Caco-2 (cell line): ENCODE measurements at regions of chr11 and their contacts with region 1.

Region 1: GRCh38 chr11:75656044-75656727 is 12.7 kb downstream of the MAP6 start:
- DNase-seq: peak; percentile 82 to 96
- H3K4me3 ChIP-seq: no peak overlapping the region
- H3K4me3 Mint-ChIP-seq: peak overlapping the region; percentile 3
- H3K27ac Mint-ChIP-seq: peak overlapping the region; percentile 6
- H3K4me1 ChIP-seq: peaks cover 89% of the 10 kb centered on the region
- H3K4me1 Mint-ChIP-seq: peaks cover 65% of the 10 kb centered on the region
- H3K27me3 ChIP-seq: no peaks in the 10 kb centered on the region
- H3K27me3 Mint-ChIP-seq: no peaks in the 10 kb centered on the region
- CTCF ChIP-seq: peak; percentile 26 to 36

Region 2: DNA sequence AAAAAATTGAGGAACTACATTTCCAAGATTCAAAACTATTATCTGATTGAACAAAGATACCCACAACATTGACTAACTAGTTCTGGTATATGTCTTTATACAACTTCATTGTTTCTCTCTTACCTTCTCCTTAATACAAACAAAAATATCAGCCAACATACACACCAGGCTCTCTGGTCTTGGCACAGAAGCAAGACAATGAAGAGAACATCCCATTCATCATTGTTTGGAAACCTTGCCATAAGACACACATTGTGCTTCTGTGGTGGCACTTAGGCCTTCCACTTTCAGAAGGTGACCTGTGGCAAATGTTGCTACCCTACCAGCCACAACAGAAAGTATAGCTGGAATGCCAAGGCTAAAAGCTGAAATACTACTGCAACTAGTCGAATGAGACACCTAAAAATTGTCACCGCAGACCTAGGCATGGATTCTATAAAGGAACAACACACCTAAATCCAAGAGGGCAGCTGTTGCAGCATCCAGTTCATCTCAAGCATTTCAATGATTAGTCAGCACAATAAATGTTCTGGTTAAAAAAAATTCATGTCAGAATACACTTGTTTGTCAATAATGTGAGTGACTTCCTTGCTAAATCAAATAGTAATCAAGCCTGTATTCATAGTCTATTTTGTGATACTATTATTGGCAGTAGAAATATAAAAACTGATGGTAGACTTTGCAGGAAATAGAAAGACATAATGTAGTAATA is 13.6 kb before region 1 on chr11:
- CTCF ChIA-PET with region 1: no interaction called
- POLR2A ChIA-PET with region 1: no interaction called
- intact Hi-C with region 1: loop called (anchors 1 kb)
- DNase-seq: no peak
- H3K4me3 ChIP-seq: no peak overlapping the region
- H3K4me3 Mint-ChIP-seq: no peak overlapping the region
- H3K27ac Mint-ChIP-seq: no peak overlapping the region
- H3K4me1 ChIP-seq: peaks cover 62% of the 10 kb centered on the region
- H3K4me1 Mint-ChIP-seq: peaks cover 48% of the 10 kb centered on the region
- H3K27me3 ChIP-seq: no peaks in the 10 kb centered on the region
- H3K27me3 Mint-ChIP-seq: no peaks in the 10 kb centered on the region
- CTCF ChIP-seq: no peak

Region 3: DNA sequence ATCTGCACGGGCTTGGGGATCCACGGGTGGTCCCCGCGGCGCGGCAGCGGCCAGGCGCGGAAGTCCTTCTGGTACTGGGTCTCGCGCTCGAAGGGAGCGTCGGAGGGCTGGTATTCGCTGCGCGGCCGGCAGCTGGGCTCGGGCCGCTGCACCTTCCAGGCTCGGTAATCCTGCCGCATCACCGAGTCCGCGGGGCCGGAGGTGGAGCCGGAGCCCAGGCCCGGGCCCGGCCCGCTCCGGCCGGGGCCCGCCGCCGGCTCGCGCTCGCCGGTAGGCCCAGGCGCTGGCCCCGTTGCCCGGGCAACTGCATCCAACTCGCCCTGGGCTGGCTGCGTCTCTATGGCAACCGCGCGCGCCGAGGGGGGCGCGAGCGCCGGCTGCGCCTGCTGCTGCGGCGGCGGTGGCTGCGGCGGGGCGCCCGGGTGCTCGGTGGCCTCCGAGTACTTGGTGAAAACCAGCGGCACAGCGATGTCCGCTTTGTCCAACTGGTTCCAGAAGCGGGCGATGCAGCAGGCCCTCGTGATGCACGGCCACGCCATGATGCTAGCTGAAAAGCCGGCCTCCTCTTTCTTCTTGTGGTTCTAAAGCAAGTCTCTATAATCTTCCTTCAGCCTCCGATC is 11.8 kb after region 1 on chr11:
- CTCF ChIA-PET with region 1: interaction called, 8 read pairs
- POLR2A ChIA-PET with region 1: interaction called, 9 read pairs
- intact Hi-C with region 1: loop called (anchors 1 kb)
- DNase-seq: peak; percentile 85 to 90
- H3K4me3 ChIP-seq: peak overlapping the region; percentile 69
- H3K4me3 Mint-ChIP-seq: peak overlapping the region; percentile 82
- H3K27ac Mint-ChIP-seq: peak overlapping the region; percentile 68
- H3K4me1 ChIP-seq: peaks cover 42% of the 10 kb centered on the region
- H3K4me1 Mint-ChIP-seq: peaks cover 33% of the 10 kb centered on the region
- H3K27me3 ChIP-seq: no peaks in the 10 kb centered on the region
- H3K27me3 Mint-ChIP-seq: no peaks in the 10 kb centered on the region
- CTCF ChIP-seq: no peak